ENCODE measurements at regions of chr17 and their contacts with region 1.

Region 1: DNA sequence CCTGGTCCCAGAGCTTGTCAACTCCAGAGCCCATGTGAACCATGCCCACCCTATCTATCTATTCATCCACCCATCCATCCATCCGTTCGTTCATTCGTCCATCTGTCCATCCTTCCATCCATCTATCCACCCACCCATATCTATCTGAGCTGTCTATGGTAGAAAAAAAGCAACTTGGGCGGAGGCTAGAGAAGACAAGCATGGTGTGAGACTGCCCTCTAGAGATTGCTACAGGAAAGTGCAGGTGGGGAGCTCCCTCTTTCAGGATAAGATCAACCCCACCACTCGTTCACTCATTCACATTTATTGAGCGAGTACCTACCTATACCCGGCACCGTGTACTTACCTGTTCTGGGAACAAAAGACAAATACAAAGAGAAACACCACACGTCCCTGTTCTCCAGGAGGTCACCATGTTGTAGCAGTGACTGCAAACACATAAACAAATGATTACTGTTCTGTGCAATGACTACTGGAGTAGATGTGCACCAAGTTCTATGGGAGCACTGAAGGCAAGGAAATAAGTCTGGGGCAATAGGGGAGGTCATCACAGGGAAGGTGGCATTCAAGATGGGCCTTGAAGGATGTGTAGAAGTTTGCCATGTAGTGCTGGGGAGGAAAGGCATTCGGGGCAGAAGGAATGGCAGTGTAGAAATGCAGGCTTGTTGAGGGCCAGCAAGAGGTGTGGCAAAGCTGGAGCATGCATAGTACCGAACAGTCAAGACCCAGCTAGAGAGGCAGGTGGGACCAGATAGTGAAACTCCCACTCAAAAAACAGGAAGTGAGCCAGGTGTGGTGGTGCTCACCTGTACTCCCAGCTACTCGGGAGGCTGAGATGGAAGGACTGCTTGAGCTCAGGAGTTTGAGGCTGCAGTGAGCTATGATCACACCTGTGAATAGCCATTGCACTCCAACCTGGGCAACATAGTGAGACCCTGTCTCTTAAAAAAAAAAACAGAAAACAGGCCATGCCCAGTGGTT is 13.4 kb upstream of the ATP5MC1 start:
- DNase-seq: peak; percentile 68
- H3K4me3 Mint-ChIP-seq: no peak overlapping the region
- H3K27ac Mint-ChIP-seq: no peak overlapping the region
- H3K4me1 Mint-ChIP-seq: no peaks in the 10 kb centered on the region
- H3K27me3 Mint-ChIP-seq: peaks cover 6% of the 10 kb centered on the region

Region 2: DNA sequence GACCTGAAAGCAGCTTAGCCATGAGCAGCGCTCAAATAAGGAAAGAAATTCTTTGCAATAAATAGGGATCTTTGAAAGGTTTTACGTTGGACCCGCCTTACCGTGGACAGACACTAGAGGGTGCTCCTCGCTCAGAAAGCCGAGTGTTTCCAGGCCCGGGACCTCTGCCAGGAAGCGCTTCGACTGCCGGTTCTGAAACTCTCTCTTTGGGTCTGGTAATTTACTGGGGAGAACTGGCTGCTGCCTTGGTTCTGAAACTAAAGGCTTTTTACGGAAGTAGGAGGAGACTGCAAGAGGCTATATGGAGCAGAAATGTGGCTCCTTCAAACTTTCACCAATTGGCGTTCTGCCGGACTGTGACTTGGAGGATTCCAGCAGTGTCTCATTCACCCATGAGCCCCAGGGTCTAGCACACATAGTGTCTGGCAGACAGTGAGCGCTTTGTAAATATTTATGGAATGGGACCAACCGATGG is 207.5 kb before region 1 on chr17:
- CTCF ChIA-PET with region 1: interaction called, 46 read pairs
- intact Hi-C with region 1: loop called (anchors 2 kb)
- DNase-seq: peak; percentile 79
- H3K4me3 Mint-ChIP-seq: no peak overlapping the region
- H3K27ac Mint-ChIP-seq: no peak overlapping the region
- H3K4me1 Mint-ChIP-seq: no peaks in the 10 kb centered on the region
- H3K27me3 Mint-ChIP-seq: peaks cover 14% of the 10 kb centered on the region

Region 3: DNA sequence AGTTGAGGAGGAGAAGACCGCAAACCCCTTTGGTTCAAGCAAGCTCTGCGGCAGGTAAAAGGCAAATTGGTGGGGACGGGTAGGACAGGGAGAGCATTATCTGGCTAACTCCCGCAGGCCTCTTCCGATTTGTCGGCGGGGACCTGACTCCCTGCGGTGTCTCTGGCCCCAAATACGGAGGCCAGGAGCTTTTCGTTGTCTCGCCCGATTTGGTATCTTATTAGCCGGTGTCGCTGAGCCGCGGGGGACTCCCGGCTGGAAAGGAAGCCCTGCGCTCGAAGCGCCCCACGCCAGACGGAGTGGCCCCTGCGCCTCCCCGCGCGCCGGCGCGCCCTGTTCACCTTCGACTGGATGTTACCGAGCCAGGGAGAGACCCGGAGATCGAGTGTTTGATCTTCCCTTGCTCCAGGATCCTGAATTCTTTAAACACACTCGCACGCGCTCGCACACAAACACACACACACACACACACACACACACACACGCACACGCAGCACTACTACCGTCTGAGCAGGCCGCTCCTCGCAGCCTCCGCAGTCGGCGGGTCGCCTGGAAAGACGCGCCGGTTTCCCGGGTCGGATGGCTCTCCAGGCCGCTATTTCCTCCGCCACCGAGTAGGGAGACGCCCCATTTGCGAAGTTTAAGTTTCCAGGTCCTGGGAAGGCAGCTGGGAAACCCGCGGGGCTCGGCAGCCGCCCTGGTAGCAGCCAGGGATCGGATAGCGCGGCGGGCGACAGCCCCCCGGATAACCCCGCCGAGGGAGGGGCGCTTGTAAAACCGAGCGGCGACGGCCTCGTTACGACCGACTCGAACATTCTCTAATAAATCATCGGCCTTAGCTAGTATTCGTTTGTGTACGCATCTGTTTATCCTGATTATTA is 160.2 kb before region 1 on chr17:
- CTCF ChIA-PET with region 1: interaction called, 42 read pairs
- intact Hi-C with region 1: loop called (anchors 1 kb)
- DNase-seq: no peak
- H3K4me3 Mint-ChIP-seq: peak overlapping the region; percentile 47
- H3K27ac Mint-ChIP-seq: no peak overlapping the region
- H3K4me1 Mint-ChIP-seq: peaks cover 27% of the 10 kb centered on the region
- H3K27me3 Mint-ChIP-seq: peaks cover 70% of the 10 kb centered on the region

Region 4: DNA sequence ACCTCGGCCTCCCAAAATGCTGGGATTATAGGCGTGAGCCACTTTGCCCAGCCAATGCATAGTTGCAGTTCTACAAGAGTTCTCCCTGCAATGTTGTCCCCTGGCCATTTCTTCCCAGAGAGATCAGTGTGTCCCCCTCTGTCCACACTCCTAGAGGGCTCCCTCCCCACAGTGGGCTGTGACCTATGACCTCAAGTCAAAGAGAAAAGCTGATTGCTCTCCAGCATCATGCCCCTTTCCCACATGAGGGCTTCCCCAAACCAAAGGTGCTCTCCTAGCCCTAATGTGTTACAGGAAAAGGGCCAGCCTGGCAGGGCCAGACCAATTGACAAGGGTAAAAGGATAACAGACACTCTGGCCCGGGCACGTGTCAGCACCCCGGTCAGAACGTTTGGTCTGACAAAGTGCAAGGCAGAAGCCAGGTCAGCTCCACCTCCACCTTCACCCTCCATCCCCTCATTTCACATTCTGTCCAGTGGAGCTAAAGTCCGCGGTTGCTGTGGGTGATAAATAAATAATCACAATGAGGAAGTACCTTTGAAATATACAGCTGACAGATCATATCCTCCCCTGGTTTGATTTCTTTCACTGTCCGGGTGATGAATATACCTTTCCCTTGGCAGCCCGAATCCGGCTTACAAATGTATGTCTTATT is 80.0 kb before region 1 on chr17:
- CTCF ChIA-PET with region 1: interaction called, 348 read pairs
- intact Hi-C with region 1: no loop called
- DNase-seq: no peak
- H3K4me3 Mint-ChIP-seq: no peak overlapping the region
- H3K27ac Mint-ChIP-seq: no peak overlapping the region
- H3K4me1 Mint-ChIP-seq: no peaks in the 10 kb centered on the region
- H3K27me3 Mint-ChIP-seq: peaks cover 17% of the 10 kb centered on the region

Region 5: DNA sequence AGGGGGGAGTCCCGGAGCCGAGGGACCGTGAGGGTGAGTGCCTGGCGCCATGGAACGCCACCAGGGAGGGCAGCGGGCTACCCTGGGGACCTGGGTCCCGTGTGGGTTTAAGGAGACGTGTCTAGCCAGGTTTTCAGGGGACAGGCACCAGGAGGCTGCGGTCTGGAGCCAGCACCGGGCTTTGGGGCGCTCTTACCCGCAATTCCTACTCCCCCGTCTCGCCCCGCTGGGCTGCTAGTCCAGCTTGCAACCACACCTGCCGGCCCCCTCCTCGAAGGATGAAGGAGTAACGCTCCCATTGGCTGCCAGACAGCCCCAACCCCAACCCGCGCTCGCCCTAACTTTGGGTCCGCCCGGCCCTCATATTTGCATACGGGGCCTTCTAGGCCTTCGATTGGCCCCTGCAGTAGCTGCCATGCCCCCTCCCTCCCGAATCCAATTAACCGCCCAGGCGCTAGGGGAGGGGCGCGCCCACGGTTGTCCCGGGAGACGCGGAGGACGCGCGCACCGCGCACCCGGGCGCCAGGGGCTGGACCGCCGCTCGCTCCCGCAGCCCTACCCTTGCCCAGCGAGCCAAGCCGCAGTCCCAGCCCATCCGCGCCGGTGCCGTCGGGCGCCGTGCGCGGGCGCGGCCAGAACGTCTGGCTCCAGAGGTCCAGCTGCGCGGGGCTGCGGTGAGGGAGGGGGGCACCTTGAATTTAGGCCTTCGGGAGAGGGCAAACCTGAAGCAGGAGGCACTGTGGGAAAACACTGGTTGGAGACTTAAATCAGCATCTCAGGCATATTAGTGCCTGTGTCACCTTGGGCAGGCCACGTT is 62.2 kb before region 1 on chr17 and contains the start of gene TTLL6:
- CTCF ChIA-PET with region 1: interaction called, 348 read pairs
- intact Hi-C with region 1: loop called (anchors 1 kb)
- DNase-seq: peak; percentile 74
- H3K4me3 Mint-ChIP-seq: peak within 1 kb of the TSS; percentile 71
- H3K27ac Mint-ChIP-seq: no peak within 1 kb of the TSS
- H3K4me1 Mint-ChIP-seq: peaks cover 20% of the 10 kb centered on the region
- H3K27me3 Mint-ChIP-seq: peaks cover 28% of the 10 kb centered on the region
- total RNA-seq, gene TTLL6: not detected

Region 6: DNA sequence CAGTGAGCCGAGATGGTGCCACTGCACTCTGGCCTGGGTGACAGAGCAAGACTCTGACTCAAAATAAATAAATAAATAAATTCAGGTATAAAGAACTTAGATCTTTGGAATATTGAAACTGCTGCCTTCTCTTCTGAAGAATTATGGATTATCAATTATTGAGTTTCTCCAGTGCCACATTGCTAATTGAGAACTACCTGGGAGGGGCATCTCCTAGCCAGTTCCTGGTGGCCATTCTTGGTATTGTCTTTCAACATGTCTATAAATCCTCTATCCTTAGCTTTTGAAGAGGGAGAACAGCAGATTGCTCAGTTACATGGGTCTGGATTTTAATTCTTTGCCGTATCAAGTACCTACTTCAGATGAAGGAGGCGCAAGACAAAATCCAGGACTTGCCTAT is 19.2 kb before region 1 on chr17:
- CTCF ChIA-PET with region 1: interaction called, 10 read pairs
- intact Hi-C with region 1: no loop called
- DNase-seq: no peak
- H3K4me3 Mint-ChIP-seq: no peak overlapping the region
- H3K27ac Mint-ChIP-seq: no peak overlapping the region
- H3K4me1 Mint-ChIP-seq: no peaks in the 10 kb centered on the region
- H3K27me3 Mint-ChIP-seq: no peaks in the 10 kb centered on the region

Region 7: GRCh38 chr17:48901241-48901640 is 22.0 kb after region 1 on chr17:
- CTCF ChIA-PET with region 1: interaction called, 20 read pairs
- intact Hi-C with region 1: no loop called
- DNase-seq: no peak
- H3K4me3 Mint-ChIP-seq: no peak overlapping the region
- H3K27ac Mint-ChIP-seq: no peak overlapping the region
- H3K4me1 Mint-ChIP-seq: no peaks in the 10 kb centered on the region
- H3K27me3 Mint-ChIP-seq: no peaks in the 10 kb centered on the region